Ovary (tissue), 10 donors: ENCODE measurements at regions of chr2 and their contacts with region 1.

Region 1: DNA sequence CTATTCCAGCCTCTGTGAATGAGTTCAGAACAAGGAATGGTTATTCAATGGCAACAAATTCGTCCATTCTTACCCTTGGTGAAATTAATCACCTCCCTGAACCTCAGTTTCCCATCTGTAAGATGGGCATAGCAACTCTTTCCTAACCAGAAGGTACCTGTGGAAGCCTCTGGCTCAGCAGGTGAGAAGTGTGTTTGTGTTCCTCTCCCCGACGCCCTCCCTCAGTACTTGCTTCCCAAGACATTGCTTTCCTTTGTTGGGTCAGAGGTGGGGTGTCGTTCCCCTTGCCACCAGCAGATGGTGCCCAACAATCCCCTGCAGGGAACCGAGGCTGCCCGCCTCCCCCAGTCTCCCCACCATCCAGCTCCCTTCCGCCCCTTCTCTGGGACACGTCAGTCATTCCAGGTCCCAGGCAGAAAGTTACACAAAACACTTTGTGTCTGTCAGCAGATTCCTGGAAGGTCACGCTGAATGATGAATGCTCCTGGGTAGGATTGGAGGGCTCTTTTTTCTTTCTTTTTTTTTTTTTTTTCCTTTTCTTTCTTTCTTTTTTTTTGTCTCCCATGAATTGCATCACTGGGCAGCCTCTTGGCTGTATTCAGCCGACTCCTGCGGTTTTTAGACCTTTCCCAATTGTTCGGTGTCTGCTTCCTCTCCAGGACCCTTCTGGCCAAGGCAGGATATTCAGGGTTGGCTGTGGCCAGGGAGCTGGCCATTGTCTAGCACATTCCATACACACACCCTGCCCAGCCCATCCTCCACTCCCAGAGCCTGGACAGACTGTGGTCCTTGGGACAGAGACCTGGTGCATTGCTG is 117.3 kb downstream of the LPIN1 start:
- DNase-seq: peak; percentile 81 to 90 (median 88)
- H3K4me3 ChIP-seq: no peak overlapping the region
- H3K27ac ChIP-seq: peak overlapping the region in 1 of 2 donors; percentile 47
- H3K4me1 ChIP-seq: no peaks in the 10 kb centered on the region
- H3K27me3 ChIP-seq: no peaks in the 10 kb centered on the region
- CTCF ChIP-seq: peak; percentile 87 to 92 (median 90)
- EP300 ChIP-seq: no peak
- POLR2A ChIP-seq: peak; percentile 22

Region 2: DNA sequence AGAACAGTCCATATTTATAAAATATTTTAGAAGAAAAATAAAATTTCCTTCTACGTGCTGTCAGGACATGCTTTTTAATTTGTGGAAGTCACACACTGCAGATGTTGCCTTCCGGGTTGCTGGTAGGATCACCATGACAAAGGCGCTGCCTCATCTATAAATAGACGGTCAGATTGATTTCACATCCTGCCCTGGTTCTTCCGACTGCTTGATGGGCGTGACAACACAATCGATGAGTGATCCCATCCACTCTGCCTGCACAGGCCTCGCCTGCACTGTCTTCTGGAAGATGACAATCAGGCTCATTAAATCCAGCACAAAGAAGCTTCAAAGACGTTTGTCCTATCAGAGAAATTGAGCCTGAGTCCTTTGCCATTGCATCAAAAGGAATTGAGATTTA is 534.1 kb after region 1 on chr2:
- intact Hi-C with region 1: loop called in 1 of 4 experiments (anchors 10 kb)
- DNase-seq: no peak
- H3K4me3 ChIP-seq: no peak overlapping the region
- H3K27ac ChIP-seq: no peak overlapping the region
- H3K4me1 ChIP-seq: no peaks in the 10 kb centered on the region
- H3K27me3 ChIP-seq: no peaks in the 10 kb centered on the region
- CTCF ChIP-seq: no peak
- EP300 ChIP-seq: no peak
- POLR2A ChIP-seq: no peak